ENCODE measurements at regions of chr11 and their contacts with region 1.

Region 1: DNA sequence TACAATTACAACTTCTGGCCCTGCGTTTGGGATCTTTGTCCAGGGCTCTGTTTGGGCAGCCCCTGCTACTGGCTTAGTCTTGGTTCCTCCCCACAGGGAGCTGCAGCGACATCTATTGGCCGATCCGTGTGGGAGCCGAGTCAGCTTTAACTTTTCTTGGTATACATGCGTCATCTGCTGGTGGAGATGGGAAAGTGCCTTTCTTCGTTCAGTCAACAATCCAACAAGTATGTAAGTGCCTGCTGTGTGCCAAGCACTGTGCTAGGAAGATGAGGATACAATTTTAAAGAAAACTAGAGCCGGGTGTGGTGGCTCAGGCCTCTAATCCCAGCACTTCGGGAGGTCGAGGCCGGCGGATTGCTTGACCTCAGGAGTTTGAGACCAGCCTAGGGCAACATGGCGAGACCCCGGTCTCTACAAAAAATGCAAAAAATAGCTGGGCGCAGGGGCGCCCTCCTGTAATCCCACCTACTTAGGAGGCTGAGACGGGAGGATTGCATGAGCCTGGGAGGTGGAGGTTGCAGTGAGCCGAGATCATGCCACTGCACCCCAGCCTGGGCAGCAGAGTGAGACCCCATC is 8.2 kb downstream of the TPBGL start:
- DNase-seq: peak; percentile 93
- ATAC-seq: peak; percentile 98
- H3K4me3 Mint-ChIP-seq: no peak overlapping the region
- H3K27ac Mint-ChIP-seq: no peak overlapping the region
- H3K4me1 Mint-ChIP-seq: no peaks in the 10 kb centered on the region
- H3K27me3 Mint-ChIP-seq: peaks cover 3% of the 10 kb centered on the region
- CTCF ChIP-seq: peak; percentile 100

Region 2: DNA sequence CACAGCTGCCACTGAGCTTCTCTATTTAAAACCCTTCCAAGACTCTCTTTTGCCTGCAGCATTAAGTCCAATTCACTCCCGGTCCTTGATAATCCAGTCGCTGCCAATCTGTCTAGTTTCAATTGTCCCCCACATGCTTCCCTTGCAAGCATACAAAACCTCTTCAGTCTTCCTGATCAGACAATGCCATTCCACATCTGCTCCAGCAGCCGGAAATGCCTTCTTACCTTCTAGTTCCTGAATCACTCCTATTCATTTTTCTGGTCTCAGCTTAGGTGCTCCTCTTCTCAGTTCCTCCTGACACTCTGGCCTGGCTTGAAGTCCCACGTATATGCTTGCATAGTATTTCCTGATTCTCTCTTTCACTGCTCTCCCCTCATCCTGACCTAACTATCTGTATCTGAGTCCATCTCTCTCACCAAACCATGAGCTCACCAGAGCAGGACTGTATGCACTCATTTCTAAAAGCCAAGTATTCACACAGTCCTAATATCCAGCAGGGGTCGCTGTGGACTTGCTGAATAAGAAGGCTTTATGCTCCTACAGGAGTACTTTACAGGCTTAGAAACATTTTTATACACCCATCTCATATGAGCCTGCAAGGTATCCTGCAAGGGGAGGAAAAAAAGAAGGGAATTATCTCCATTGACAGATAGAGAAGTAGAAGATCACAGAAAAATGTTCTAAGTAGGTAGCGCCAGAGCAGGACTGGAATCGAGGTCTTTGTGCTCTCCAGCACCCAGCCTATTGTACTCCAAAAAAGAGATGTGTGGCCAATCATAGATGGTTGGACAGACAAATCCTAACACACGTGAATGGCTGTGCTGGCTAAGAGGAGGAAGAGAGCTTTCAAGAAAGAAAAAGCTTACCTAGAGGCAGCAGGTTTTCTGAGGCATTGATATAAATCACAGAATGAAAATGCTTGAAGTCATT is 319.1 kb before region 1 on chr11:
- CTCF ChIA-PET with region 1: interaction called, 13 read pairs
- POLR2A ChIA-PET with region 1: no interaction called
- intact Hi-C with region 1: loop called (anchors 5 kb)
- DNase-seq: peak; percentile 87
- ATAC-seq: peak; percentile 57
- H3K4me3 Mint-ChIP-seq: no peak overlapping the region
- H3K27ac Mint-ChIP-seq: no peak overlapping the region
- H3K4me1 Mint-ChIP-seq: peaks cover 29% of the 10 kb centered on the region
- H3K27me3 Mint-ChIP-seq: no peaks in the 10 kb centered on the region
- CTCF ChIP-seq: peak; percentile 97

Region 3: DNA sequence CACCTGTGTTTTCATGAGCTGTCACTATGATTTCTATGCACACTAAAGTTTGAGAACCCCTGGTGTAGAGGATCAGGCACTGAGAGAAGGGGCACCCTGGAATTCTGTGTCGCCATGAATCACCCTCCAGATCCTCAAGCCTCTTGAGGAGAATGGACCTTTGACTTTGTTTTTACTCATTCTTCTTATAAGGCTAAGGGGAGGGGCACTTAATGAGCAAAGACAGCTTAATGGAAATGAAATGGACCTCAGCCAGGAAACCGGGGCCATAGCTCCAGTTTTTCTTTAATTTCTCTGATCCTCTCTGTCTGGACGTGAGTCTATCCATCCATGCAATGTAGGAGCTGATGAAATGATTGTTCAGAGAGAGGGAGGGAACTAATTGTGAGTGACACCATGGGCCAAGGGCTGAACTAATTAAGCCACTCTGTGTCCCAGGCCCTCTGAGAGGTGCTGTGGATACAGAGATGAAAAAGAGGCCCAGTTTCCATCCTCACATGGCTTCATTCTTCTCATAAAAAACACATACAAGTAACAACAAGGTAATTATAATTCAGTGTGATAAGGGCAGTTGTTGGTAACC is 185.0 kb before region 1 on chr11:
- CTCF ChIA-PET with region 1: no interaction called
- POLR2A ChIA-PET with region 1: no interaction called
- intact Hi-C with region 1: no loop called
- DNase-seq: no peak
- ATAC-seq: no peak
- H3K4me3 Mint-ChIP-seq: no peak overlapping the region
- H3K27ac Mint-ChIP-seq: no peak overlapping the region
- H3K4me1 Mint-ChIP-seq: no peaks in the 10 kb centered on the region
- H3K27me3 Mint-ChIP-seq: peaks cover 26% of the 10 kb centered on the region
- CTCF ChIP-seq: no peak

Region 4: DNA sequence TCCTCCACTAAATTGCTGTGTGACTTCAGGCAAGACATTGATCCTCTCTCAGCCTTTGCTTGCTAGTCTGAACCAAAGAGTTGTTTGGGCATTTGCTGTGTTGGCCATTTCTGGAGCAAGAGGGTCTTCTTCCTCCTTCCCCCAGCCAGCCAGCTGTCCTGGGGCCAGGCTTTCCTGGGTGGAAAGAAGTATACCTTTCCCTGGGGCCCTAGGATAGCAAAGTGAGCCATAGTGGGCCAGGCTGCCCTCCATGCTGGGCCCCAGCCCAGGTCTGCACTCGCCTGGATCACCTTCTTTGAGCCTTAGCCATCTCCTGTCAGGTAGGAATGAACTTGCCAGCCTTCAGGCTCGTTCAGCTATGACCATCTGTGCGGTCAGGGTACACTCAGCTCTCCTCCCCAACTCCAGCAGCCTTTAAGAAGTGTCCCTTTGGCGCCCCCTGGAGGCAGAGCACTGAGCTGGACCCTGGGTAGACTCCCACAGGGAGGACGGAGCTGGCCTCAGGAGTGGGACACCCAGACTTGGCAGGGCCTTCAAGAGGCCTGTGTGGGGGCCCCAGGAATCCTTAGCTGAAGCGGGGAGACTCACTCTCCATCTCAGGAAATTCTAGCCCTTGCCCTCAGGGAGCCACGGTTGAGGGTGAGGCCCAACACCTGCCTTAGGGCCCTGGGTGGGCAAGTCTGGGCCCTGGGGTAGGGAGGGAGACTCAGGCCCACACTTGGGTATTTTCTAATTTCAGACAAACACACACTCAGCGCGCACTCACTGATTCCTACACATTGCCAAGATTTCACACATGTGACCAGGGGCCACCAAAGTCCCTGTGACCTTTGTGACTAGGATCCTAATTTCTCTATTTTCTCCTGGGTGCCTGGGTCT is 43.9 kb before region 1 on chr11:
- CTCF ChIA-PET with region 1: interaction called, 37 read pairs
- POLR2A ChIA-PET with region 1: no interaction called
- intact Hi-C with region 1: no loop called
- DNase-seq: peak; percentile 93
- ATAC-seq: peak; percentile 99
- H3K4me3 Mint-ChIP-seq: no peak overlapping the region
- H3K27ac Mint-ChIP-seq: no peak overlapping the region
- H3K4me1 Mint-ChIP-seq: no peaks in the 10 kb centered on the region
- H3K27me3 Mint-ChIP-seq: peaks cover 1% of the 10 kb centered on the region
- CTCF ChIP-seq: peak; percentile 87

Region 5: GRCh38 chr11:75223954-75224643 is 24.7 kb before region 1 on chr11:
- CTCF ChIA-PET with region 1: interaction called, 12 read pairs
- POLR2A ChIA-PET with region 1: no interaction called
- intact Hi-C with region 1: no loop called
- DNase-seq: no peak
- ATAC-seq: no peak
- H3K4me3 Mint-ChIP-seq: no peak overlapping the region
- H3K27ac Mint-ChIP-seq: no peak overlapping the region
- H3K4me1 Mint-ChIP-seq: no peaks in the 10 kb centered on the region
- H3K27me3 Mint-ChIP-seq: no peaks in the 10 kb centered on the region
- CTCF ChIP-seq: no peak

Region 6: DNA sequence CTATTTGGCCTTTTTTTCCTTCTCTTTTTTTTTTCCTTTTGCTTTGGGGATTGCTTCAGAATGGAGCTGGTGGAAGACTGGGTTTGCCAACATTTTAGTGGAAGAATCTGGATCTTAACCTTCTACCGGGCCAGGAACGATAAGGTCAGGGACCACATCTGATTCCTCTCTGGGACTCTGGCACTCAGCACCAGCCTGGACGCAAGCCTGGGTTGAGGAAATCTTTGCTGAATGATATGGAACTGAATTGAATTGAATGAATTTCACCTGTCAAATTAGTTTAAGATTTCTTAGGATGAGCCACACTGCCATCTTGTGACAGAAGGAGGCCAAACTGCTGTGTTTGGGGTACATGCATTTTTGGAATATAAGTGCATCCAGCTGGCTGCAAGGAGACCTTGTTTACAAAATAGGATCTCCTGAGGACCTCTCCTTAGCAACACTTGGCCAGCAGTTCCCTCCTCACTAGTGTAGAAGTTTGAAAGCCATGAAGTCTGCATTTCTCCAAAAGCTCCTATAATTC is 22.2 kb after region 1 on chr11:
- CTCF ChIA-PET with region 1: interaction called, 15 read pairs
- POLR2A ChIA-PET with region 1: no interaction called
- intact Hi-C with region 1: no loop called
- DNase-seq: peak; percentile 37
- ATAC-seq: no peak
- H3K4me3 Mint-ChIP-seq: no peak overlapping the region
- H3K27ac Mint-ChIP-seq: no peak overlapping the region
- H3K4me1 Mint-ChIP-seq: peaks cover 30% of the 10 kb centered on the region
- H3K27me3 Mint-ChIP-seq: no peaks in the 10 kb centered on the region
- CTCF ChIP-seq: peak; percentile 36

Region 7: GRCh38 chr11:75380711-75381420 is 132.1 kb after region 1 on chr11:
- CTCF ChIA-PET with region 1: interaction called, 15 read pairs
- POLR2A ChIA-PET with region 1: no interaction called
- intact Hi-C with region 1: no loop called
- DNase-seq: no peak
- ATAC-seq: no peak
- H3K4me3 Mint-ChIP-seq: no peak overlapping the region
- H3K27ac Mint-ChIP-seq: no peak overlapping the region
- H3K4me1 Mint-ChIP-seq: peaks cover 19% of the 10 kb centered on the region
- H3K27me3 Mint-ChIP-seq: no peaks in the 10 kb centered on the region
- CTCF ChIP-seq: no peak